ENCODE measurements at regions of chr18 and their contacts with region 1.

Region 1: DNA sequence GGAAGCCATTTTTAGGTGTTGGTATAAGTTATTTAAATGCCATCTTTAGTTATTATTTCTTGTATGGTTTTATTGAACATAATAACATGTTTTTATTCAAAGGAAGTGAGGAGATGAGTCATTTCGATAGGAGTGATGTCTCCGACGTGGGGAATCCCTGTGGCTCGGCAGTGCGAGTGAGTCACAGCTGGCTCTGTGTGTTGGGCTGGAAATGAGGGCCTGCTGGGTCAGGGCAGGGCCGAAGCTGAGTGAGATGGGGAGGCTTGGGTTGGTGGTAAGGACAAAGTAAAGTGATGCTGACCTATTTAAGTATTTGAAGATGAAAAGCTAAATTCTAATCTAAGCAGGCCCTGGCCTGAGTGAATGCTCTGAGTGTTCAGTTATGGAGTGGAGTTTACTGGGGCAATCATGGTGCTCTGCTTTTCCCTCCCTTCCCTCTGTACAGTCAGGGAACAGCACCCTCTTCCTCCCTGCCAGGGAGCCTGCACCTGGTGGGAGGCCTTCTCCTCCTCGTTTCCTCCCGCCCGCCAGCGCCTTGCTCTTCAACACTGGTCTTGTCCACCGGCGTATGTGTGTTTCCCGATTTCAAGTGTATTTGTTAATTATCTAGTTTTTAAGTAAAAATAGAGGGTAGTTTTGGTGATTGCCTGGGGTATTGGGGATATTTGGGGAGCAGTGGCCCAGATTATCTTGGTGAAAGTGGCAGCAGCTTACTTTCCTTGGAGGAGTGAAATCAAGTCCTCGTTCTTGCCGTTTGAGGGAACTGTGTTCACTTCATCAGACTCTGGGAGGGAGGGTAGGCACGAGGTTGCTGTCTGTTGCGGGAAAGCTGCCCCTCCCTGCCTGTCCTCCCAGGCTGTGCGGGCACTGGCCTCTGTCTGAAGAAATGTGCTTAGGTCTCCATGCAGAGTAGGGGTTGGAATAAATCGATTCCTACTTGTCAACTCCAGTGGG is 157.0 kb downstream of the LDLRAD4 start:
- DNase-seq: peak; percentile 92
- H3K4me3 Mint-ChIP-seq: peak overlapping the region; percentile 49
- H3K27ac Mint-ChIP-seq: peak overlapping the region; percentile 97
- H3K4me1 Mint-ChIP-seq: peaks cover 79% of the 10 kb centered on the region
- H3K27me3 Mint-ChIP-seq: no peaks in the 10 kb centered on the region

Region 2: GRCh38 chr18:12947355-12948041 is 428.1 kb before region 1 on chr18 and contains the start of gene SEH1L:
- CTCF ChIA-PET with region 1: no interaction called
- POLR2A ChIA-PET with region 1: no interaction called
- intact Hi-C with region 1: loop called (anchors 1 kb)
- DNase-seq: peak; percentile 100
- H3K4me3 Mint-ChIP-seq: peak within 1 kb of the TSS; percentile 95
- H3K27ac Mint-ChIP-seq: peak within 1 kb of the TSS; percentile 97
- H3K4me1 Mint-ChIP-seq: peaks cover 45% of the 10 kb centered on the region
- H3K27me3 Mint-ChIP-seq: no peaks in the 10 kb centered on the region
- total RNA-seq, gene SEH1L: 90.3 to 92.5 TPM

Region 3: GRCh38 chr18:13137670-13138419 is 237.7 kb before region 1 on chr18:
- CTCF ChIA-PET with region 1: no interaction called
- POLR2A ChIA-PET with region 1: no interaction called
- intact Hi-C with region 1: loop called (anchors 5 kb)
- DNase-seq: peak; percentile 81
- H3K4me3 Mint-ChIP-seq: peak overlapping the region; percentile 88
- H3K27ac Mint-ChIP-seq: peak overlapping the region; percentile 69
- H3K4me1 Mint-ChIP-seq: peaks cover 26% of the 10 kb centered on the region
- H3K27me3 Mint-ChIP-seq: no peaks in the 10 kb centered on the region

Region 4: GRCh38 chr18:13289481-13290205 is 85.9 kb before region 1 on chr18:
- CTCF ChIA-PET with region 1: interaction called, 4 read pairs
- POLR2A ChIA-PET with region 1: interaction called, 11 read pairs
- intact Hi-C with region 1: loop called (anchors 1 kb)
- DNase-seq: no peak
- H3K4me3 Mint-ChIP-seq: no peak overlapping the region
- H3K27ac Mint-ChIP-seq: peak overlapping the region; percentile 82
- H3K4me1 Mint-ChIP-seq: peaks cover 47% of the 10 kb centered on the region
- H3K27me3 Mint-ChIP-seq: peaks cover 8% of the 10 kb centered on the region

Region 5: DNA sequence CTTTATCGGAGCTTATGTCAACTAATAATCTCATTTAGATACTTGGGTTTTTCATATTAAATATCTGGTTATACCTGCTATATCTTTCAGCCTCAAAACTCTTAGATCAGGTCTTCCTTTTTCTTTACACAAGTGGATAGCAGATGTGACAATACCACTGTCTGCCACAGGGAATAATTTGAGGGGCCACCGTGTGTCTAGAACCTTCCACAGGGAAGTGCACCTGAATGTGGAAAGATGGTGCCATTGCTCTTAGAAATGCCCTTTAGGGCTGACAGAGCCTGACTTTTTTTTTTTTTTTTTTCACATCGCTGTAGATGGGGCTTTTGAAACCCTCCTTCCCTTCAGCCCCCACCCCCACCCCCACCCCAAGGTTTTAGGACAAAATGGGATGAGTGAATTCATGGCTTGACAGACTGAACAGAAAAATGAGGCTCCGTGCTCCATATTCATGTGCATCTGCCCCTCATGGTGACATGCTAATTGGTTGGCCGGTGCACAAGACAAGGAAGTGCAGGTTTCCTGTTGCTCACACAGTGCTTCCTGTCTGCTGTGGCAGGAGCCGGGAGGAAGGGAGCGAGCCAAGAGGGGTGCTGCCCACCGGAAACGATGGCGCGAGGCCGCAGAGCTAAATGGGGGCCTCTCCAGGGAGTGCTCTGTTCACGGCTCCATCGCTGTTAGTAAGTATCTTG is 89.0 kb after region 1 on chr18:
- CTCF ChIA-PET with region 1: no interaction called
- POLR2A ChIA-PET with region 1: no interaction called
- intact Hi-C with region 1: loop called (anchors 1 kb)
- DNase-seq: peak; percentile 83
- H3K4me3 Mint-ChIP-seq: peak overlapping the region; percentile 86
- H3K27ac Mint-ChIP-seq: peak overlapping the region; percentile 95
- H3K4me1 Mint-ChIP-seq: peaks cover 56% of the 10 kb centered on the region
- H3K27me3 Mint-ChIP-seq: no peaks in the 10 kb centered on the region

Region 6: DNA sequence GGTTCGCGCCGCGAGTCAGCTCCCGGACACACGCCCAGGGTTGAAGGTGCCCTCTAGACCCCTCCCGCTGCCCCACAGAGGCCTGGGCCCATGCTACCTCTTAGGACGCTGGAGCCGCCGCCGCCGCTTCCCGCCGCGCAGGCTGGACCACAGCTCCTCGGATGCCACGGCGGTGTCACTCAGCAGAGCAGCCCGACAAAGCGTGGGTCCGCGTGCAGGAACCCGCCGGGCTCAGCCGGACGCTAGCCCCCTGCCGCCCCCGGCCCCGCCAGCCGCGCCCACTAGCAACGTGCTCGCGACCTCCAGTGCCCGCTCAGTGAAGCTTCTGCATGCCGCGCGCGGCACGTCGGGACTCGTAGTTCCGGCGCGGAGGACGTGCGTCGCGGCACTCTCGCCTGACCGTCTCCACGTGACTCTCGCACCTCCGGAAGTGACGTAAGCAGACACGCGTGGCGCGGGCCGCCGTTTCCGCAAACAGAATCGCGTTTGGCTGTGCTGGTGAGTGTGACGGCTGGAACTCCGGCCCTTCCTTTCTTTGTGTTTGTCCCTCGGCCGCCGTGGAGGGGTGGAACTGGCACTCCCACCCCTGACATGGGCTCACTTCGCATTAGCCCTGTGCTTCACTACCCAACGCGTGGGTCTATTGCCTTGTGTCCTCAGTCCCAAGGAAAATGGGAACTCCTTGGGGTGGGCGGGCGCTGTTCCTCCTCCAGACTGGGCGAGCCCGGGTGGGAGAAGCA is 350.8 kb after region 1 on chr18 and contains the starts of genes FAM210A and RNMT:
- CTCF ChIA-PET with region 1: no interaction called
- POLR2A ChIA-PET with region 1: no interaction called
- intact Hi-C with region 1: loop called (anchors 2 kb)
- DNase-seq: peak; percentile 96
- H3K4me3 Mint-ChIP-seq: peak within 1 kb of the TSS; percentile 83
- H3K27ac Mint-ChIP-seq: peak within 1 kb of the TSS; percentile 89
- H3K4me1 Mint-ChIP-seq: peaks cover 61% of the 10 kb centered on the region
- H3K27me3 Mint-ChIP-seq: no peaks in the 10 kb centered on the region
- total RNA-seq, gene FAM210A: 24.9 to 29.4 TPM
- total RNA-seq, gene RNMT: 41.2 to 43.6 TPM